ENCODE measurements at regions of chr17 and their contacts with region 1.

Region 1: GRCh38 chr17:4997302-4998026 is at the starts of genes INCA1 and KIF1C:
- DNase-seq: peak; percentile 54
- H3K4me3 ChIP-seq: peak within 1 kb of the TSS; percentile 94
- H3K27ac ChIP-seq: peak within 1 kb of the TSS; percentile 39
- H3K27me3 ChIP-seq: no peaks in the 10 kb centered on the region
- CTCF ChIP-seq: no peak
- polyA plus RNA-seq, gene INCA1: 0.29 and 0.56 TPM in 2 replicates
- polyA plus RNA-seq, gene KIF1C: 46.9 and 49.8 TPM in 2 replicates

Region 2: DNA sequence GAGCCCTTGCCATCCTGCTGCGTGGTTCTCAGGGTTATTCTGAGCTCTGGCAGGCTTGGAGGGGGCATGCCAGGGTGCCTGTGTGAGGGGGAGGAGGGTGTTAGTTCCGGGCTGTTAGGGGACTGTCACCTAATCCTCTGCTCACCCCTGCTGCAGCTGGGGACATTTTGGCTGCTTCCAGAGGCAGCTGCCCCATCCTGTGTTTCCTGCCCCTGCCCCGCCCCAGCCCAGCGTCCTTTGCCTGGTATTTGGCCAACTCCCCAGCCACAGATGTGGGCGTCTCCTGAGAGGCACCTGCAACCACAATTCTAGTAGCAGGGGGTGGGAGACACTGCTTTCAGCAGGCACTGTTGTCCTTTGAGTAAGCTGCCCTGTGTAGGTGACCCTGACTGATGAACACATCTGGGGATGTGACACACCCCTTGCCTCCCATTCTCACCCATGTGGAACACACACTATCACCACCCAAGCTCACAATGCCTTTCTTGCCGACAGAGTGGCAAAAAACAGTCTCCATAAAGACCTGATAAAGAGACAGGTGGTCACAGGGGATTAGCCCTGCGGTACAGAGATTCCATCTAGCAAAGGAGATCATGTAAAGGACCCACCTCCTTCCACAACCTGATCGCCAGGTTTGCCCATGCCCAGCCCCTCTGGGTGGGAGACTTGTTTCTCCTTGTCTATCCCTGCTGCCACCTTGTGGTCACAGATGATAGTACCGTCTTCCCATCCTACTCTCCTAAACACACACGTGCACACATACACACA is 94.2 kb before region 1 on chr17 and contains the start of gene CHRNE:
- CTCF ChIA-PET with region 1: no interaction called
- POLR2A ChIA-PET with region 1: no interaction called
- DNase-seq: peak; percentile 56
- H3K4me3 ChIP-seq: no peak within 1 kb of the TSS
- H3K27ac ChIP-seq: no peak within 1 kb of the TSS
- H3K27me3 ChIP-seq: peaks cover 5% of the 10 kb centered on the region
- CTCF ChIP-seq: peak; percentile 82
- polyA plus RNA-seq, gene CHRNE: 0.07 and 0.19 TPM in 2 replicates

Region 3: DNA sequence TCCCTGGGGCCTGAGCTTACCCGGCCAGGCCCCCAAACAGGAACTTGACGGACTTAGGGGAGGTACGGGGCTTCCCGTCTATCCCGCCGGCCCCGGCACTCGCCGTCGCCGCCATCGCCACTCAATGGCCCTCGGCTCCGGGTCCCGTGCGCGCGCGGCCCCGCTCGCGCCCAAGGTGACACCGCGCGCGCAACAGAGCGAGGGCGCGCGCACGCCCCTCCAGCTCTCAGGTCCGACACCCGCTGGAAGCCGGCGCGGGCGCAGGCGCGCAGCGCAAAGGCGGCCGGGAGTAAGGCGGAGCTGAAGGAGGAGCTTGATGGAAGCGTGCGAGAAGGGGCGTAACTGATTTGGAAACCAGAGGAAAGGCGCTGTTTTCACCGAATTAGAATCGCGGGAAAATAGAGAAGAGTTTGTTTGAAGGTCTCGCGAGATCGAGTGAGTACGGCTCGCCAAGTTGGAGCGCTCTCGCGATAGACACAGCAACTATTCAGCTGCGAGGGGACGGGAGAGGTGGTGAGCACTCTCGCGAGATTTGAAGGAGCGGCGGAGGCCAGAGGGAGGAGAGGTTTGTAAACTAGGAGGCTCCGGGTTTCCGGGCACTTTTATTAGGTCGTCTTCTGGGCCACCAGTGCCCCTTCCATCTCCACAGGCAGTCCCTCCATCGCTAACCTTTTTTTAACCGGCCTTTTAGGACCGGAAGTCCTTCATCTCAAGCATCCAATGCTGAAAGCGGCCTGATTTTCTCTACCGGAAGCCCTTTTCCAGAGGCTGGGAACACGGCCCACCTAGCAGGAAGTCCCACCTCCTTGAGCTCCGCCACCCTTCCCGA is 57.5 kb before region 1 on chr17 and contains the starts of genes RNF167 and SLC25A11:
- CTCF ChIA-PET with region 1: no interaction called
- POLR2A ChIA-PET with region 1: interaction called, 15 read pairs
- DNase-seq: peak; percentile 99
- H3K4me3 ChIP-seq: peak within 1 kb of the TSS; percentile 92
- H3K27ac ChIP-seq: peak within 1 kb of the TSS; percentile 98
- H3K27me3 ChIP-seq: no peaks in the 10 kb centered on the region
- CTCF ChIP-seq: no peak
- polyA plus RNA-seq, gene RNF167: 63.1 and 64.3 TPM in 2 replicates
- polyA plus RNA-seq, gene SLC25A11: 44.7 and 50.0 TPM in 2 replicates

Region 4: DNA sequence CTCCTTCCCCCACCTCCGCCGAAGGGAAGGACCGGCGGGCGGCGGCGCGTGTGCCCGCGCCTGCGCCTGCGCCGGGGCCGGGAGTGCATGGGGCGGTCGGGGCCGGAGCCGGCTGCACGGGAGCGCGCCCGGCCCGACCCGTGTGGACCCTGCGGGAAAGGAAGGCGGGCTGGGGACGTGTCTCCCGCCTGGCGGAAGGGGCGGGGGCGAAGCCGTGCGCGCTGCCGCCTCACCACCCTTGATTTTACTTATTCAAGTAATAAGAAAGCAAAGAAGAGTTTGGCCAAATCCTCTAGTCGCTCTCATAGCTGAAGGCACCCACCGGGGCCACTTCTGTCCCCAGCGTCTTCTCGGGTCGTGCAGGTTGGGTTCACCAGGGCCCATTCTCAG is 48.5 kb before region 1 on chr17:
- CTCF ChIA-PET with region 1: no interaction called
- POLR2A ChIA-PET with region 1: interaction called, 11 read pairs
- DNase-seq: no peak
- H3K4me3 ChIP-seq: peak overlapping the region; percentile 99
- H3K27ac ChIP-seq: peak overlapping the region; percentile 91
- H3K27me3 ChIP-seq: no peaks in the 10 kb centered on the region
- CTCF ChIP-seq: no peak

Region 5: GRCh38 chr17:5049314-5049895 is 51.9 kb after region 1 on chr17:
- CTCF ChIA-PET with region 1: no interaction called
- POLR2A ChIA-PET with region 1: no interaction called
- DNase-seq: no peak
- H3K4me3 ChIP-seq: no peak overlapping the region
- H3K27ac ChIP-seq: no peak overlapping the region
- H3K27me3 ChIP-seq: no peaks in the 10 kb centered on the region
- CTCF ChIP-seq: no peak

Region 6: DNA sequence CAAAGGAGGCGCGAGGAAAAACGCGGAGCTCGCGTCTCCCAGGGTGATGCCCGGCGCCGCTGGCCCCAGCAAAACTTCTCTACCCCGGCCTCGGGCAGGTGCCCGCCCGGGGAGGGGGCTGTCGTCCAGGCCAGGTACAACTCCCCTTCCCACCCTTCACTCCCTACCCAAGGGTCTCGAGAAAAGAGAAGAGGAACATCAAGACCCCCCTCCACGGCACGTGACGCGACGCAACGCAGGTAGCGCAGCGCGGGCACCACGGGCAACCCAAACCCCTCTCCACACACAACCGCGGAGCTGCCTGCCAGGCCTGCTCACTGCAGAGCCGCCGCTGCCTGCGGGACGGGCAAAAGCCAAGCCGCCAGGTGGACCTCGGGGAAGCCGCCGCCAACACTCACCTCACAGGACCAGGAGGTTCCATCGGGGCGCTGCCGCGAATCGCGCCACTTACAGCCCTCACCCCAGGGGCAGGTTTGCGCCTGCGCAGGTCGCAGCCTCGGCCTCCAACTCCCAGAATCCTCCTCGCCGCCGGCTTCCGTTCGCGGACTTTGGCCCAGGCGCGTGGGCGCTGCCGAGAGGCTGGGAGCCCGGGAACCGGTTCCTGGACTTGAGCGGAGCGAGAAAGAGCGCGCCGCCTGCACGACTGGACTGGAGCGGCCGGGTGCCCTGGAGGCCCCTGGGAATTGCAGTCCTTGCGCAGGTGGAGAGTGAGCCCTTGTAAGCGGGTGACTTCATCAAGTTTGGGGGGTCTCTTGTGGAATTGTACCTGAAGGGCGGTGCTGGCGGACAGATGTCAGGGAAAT is 114.1 kb after region 1 on chr17 and contains the start of gene ZNF232:
- CTCF ChIA-PET with region 1: no interaction called
- POLR2A ChIA-PET with region 1: no interaction called
- DNase-seq: peak; percentile 72
- H3K4me3 ChIP-seq: peak within 1 kb of the TSS; percentile 96
- H3K27ac ChIP-seq: peak within 1 kb of the TSS; percentile 11
- H3K27me3 ChIP-seq: peaks cover 13% of the 10 kb centered on the region
- CTCF ChIP-seq: no peak
- polyA plus RNA-seq, gene ZNF232: 4.2 and 4.8 TPM in 2 replicates

Region 7: DNA sequence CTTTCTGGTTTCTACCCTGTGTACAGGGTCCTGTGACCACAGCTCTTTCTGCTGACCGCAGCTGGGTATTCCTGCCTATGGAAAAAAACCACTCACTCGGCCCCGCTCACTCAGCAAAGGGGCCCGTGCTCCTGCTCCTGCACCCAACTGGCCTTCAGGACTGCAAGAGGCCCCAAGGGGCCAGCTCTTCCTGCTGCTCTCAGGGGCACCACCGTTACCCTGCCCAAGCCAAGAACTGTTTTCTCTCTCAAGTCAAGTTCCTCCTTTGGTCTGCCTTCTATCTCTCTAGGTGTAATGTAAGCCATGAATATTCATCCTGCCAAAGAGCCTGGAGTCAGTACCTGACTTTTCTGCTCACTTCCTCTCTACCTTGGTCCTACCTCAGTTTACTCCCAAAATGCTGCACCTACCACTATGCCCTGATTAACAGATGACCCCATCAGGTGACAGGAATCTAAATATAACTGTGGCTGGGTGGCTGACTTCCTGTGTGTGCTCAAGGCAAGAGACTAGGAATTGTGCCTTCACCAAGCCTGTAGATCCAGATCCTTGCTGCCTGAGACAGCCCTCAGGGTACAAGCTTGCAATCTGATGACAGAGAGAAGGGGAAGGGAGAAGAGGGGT is 257.6 kb after region 1 on chr17:
- CTCF ChIA-PET with region 1: no interaction called
- POLR2A ChIA-PET with region 1: no interaction called
- DNase-seq: no peak
- H3K4me3 ChIP-seq: no peak overlapping the region
- H3K27ac ChIP-seq: no peak overlapping the region
- H3K27me3 ChIP-seq: peaks cover 3% of the 10 kb centered on the region
- CTCF ChIP-seq: no peak